ENCODE measurements at regions of chr4 and their contacts with region 1.

Region 1: DNA sequence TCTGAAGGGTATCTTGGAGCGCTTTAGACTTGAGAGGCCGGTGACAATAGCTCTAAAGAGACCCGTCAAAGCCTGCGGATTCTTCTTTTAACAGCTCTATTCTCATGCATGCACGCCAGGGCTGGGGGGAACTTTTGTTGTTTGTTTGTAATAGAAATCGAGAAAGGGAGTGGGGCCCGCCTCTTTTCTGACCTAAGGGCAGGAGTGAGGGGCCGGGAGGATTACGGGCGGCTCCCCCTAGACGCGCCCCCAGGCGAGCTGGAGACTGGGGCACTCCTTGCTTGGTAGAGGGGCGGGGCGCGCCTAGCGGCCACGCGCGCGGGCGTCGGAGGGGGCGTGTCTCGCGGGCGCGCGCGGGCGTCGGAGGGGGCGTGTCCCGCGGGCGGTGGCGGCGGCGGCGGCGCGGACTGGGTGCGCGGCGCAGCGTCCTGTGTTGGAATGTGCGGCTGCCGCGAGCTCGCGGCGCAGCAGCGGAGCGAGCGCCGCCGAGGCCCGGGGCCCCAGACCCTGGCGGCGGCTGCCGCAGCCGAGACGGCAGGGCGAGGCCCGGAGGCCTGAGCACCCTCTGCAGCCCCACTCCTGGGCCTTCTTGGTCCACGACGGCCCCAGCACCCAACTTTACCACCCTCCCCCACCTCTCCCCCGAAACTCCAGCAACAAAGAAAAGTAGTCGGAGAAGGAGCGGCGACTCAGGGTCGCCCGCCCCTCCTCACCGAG is at the start of gene REST:
- DNase-seq: no peak
- ATAC-seq: peak; percentile 86
- H3K4me3 ChIP-seq: peak within 1 kb of the TSS; percentile 68 to 75
- H3K27ac ChIP-seq: peak within 1 kb of the TSS; percentile 23; the same call in 1 of the 2 replicates
- H3K4me1 ChIP-seq: peaks cover 10% of the 10 kb centered on the region
- H3K27me3 ChIP-seq: no peaks in the 10 kb centered on the region
- CTCF ChIP-seq: no peak
- total RNA-seq, gene REST: 38.8 TPM

Region 2: GRCh38 chr4:56958111-56958517 is 50.5 kb after region 1 on chr4:
- CTCF ChIA-PET with region 1: interaction called, 3 read pairs
- POLR2A ChIA-PET with region 1: interaction called, 10 read pairs
- in situ Hi-C with region 1: no loop called
- intact Hi-C with region 1: no loop called
- DNase-seq: no peak
- ATAC-seq: no peak
- H3K4me3 ChIP-seq: no peak overlapping the region
- H3K27ac ChIP-seq: no peak overlapping the region
- H3K4me1 ChIP-seq: no peaks in the 10 kb centered on the region
- H3K27me3 ChIP-seq: no peaks in the 10 kb centered on the region
- CTCF ChIP-seq: no peak